ENCODE measurements at regions of chr13 and their contacts with region 1.

Region 1: DNA sequence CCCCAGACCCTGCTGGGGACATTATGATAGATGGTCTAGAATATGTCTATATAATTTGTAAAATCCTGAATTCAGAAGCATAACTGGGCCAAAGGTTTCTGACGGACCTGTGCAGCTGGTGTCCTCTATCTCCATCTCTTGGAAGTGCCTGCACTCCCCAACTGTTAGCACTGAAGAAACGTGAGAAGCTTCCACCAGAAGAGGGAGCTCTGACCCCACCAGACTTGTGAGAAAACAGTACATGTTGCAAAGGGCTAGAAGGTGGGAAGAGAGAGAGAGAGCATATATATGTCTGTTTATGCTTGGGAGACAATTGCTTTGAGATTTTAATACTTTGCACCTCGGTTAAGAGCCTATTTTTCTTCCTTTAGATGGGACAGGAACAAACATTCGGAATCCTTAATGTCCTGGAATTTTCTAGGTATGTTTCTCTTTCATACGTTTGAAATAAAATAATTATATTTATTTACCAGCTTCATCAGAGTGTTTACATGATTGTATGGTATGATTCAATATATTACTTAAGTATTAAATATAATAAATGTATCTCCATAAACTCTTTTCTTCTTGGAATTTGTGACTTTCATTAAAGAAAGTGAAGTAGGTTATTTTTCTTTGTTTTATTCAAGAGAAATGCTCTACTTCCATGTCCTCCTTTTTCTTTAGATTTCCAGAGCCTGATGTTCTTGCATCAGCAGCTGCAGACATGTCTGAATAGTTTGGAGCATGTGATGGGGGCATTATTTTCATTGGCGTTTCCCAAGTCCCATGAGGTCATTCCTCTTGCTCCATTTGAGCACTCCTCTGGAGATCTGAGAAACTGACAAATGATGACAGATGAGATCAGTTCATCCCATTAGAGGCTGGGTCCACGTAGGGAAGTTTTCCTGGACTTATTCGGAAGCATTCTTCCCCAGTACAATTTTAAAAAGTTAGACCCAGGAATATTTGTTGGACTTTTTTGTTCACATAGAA is 202.9 kb downstream of the ATP8A2 start:
- DNase-seq: peak; percentile 79
- H3K4me3 Mint-ChIP-seq: no peak overlapping the region
- H3K27ac Mint-ChIP-seq: no peak overlapping the region
- H3K4me1 Mint-ChIP-seq: peaks cover 2% of the 10 kb centered on the region
- H3K27me3 Mint-ChIP-seq: peaks cover 35% of the 10 kb centered on the region

Region 2: DNA sequence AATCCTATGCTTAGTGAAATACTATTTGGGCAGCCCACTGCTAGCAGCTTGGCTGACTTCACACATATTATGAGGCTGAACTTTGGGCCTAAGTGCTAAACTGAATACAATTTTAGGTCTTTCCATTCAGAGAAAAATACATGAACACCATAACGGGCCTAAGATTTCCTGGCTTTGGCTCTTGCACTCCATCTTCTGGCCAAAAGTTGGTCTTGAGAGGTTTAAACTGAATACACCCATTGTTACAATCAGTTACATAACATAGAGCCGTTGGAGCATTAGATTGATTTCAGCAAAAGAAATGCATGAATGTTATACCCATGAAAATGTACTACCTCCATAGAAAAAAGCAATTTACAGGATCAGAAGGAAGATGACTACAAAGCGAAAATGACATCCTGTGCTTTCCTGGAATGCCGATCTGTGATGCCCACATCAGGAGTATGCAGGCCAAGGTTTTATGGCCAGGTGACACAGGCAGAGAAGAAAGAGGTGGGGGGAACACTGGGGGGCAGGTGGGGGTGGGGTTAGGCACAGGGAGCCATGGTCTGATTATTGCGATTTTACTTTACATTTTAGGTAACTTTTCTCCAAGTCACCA is 488.2 kb after region 1 on chr13:
- CTCF ChIA-PET with region 1: interaction called, 5 read pairs
- POLR2A ChIA-PET with region 1: no interaction called
- intact Hi-C with region 1: loop called (anchors 1 kb)
- DNase-seq: peak; percentile 43
- H3K4me3 Mint-ChIP-seq: no peak overlapping the region
- H3K27ac Mint-ChIP-seq: no peak overlapping the region
- H3K4me1 Mint-ChIP-seq: no peaks in the 10 kb centered on the region
- H3K27me3 Mint-ChIP-seq: peaks cover 1% of the 10 kb centered on the region

Region 3: GRCh38 chr13:26071691-26072090 is 497.0 kb after region 1 on chr13:
- CTCF ChIA-PET with region 1: interaction called, 22 read pairs
- POLR2A ChIA-PET with region 1: no interaction called
- intact Hi-C with region 1: loop called (anchors 1 kb)
- DNase-seq: no peak
- H3K4me3 Mint-ChIP-seq: no peak overlapping the region
- H3K27ac Mint-ChIP-seq: no peak overlapping the region
- H3K4me1 Mint-ChIP-seq: peaks cover 2% of the 10 kb centered on the region
- H3K27me3 Mint-ChIP-seq: peaks cover 17% of the 10 kb centered on the region

Measured in activated CD4-positive, alpha-beta memory T cell treated with anti-CD3 and anti-CD28 coated beads for 36 hours (primary cell).